ENCODE measurements at regions of chr12 and their contacts with region 1.

Region 1: GRCh38 chr12:52032804-52033502 is 18.3 kb upstream of the NR4A1 start:
- DNase-seq: peak; percentile 57 to 93 (median 78)
- ATAC-seq: peak; percentile 81 to 90 (median 89)
- H3K4me3 ChIP-seq: peak overlapping the region; percentile 25 to 52
- H3K4me3 Mint-ChIP-seq: peak overlapping the region; percentile 66 to 77 (median 68)
- H3K27ac ChIP-seq: peak overlapping the region; percentile 93
- H3K27ac Mint-ChIP-seq: peak overlapping the region; percentile 79 to 85
- H3K4me1 ChIP-seq: peaks cover 5 to 40% of the 10 kb centered on the region in 2 experiments
- H3K4me1 Mint-ChIP-seq: peaks cover 28 to 42% (median 32%) of the 10 kb centered on the region in 3 donors
- H3K27me3 ChIP-seq: peaks cover 0 to 7% of the 10 kb centered on the region in 2 experiments
- H3K27me3 Mint-ChIP-seq: no peaks in the 10 kb centered on the region

Region 2: DNA sequence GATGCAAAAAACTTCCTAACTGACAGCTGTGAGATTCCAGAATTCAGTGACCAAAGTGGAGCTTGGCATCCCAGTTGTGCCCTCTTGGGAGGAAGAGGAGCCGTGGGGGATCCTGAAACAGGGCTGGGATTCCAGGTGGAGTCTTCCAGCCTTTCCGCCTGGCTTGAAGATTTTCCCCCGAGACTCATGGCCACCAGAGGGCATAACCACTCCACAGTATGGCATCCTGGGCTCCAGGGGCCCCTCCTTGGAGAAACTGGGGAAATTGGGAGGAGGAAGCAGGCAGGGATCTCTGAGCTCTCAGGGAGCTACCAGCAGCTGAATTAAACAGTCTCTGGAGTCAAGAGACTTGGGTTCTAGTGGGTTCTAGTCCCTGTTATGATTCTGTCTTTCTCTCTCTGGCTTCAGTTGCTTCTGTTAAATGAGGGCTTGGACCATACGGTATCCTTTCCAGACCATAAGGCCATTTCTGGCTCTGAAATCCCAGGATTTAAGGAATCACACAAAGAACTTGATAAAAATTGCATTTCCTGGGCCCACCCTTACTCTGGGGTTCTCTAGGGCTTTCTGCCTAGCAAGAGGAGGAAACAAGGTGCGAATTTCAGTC is 28.8 kb before region 1 on chr12:
- CTCF ChIA-PET with region 1: interaction called in 1 of 2 experiments, 5 read pairs
- POLR2A ChIA-PET with region 1: interaction called, 3 to 16 read pairs
- DNase-seq: peak in 1 of 35 experiments; percentile 41
- ATAC-seq: no peak
- H3K4me3 ChIP-seq: no peak overlapping the region
- H3K4me3 Mint-ChIP-seq: no peak overlapping the region
- H3K27ac ChIP-seq: no peak overlapping the region
- H3K27ac Mint-ChIP-seq: peak overlapping the region; percentile 39 to 43
- H3K4me1 ChIP-seq: peaks cover 3 to 33% of the 10 kb centered on the region in 2 experiments
- H3K4me1 Mint-ChIP-seq: peaks cover 16 to 32% (median 24%) of the 10 kb centered on the region in 3 donors
- H3K27me3 ChIP-seq: peaks cover 0 to 28% of the 10 kb centered on the region in 2 experiments
- H3K27me3 Mint-ChIP-seq: no peaks in the 10 kb centered on the region

Region 3: GRCh38 chr12:52050761-52051541 is 18.0 kb after region 1 on chr12 and contains the start of gene NR4A1:
- CTCF ChIA-PET with region 1: interaction called, 3 to 23 read pairs
- POLR2A ChIA-PET with region 1: interaction called, 4 to 14 read pairs
- DNase-seq: peak; percentile 94 to 100 (median 99)
- ATAC-seq: peak; percentile 85 to 92 (median 90)
- H3K4me3 ChIP-seq: peak within 1 kb of the TSS; percentile 91
- H3K4me3 Mint-ChIP-seq: peak within 1 kb of the TSS; percentile 88 to 90 (median 89)
- H3K27ac ChIP-seq: peak within 1 kb of the TSS; percentile 99
- H3K27ac Mint-ChIP-seq: peak within 1 kb of the TSS; percentile 91 to 93
- H3K4me1 ChIP-seq: peaks cover 19 to 39% of the 10 kb centered on the region in 2 experiments
- H3K4me1 Mint-ChIP-seq: peaks cover 34 to 41% (median 38%) of the 10 kb centered on the region in 3 donors
- H3K27me3 ChIP-seq: peaks cover 0 to 18% of the 10 kb centered on the region in 2 experiments
- H3K27me3 Mint-ChIP-seq: peaks cover 0 to 4% of the 10 kb centered on the region in 2 donors
- total RNA-seq, gene NR4A1: 5.9 to 103 (median 7.3) TPM

Region 4: DNA sequence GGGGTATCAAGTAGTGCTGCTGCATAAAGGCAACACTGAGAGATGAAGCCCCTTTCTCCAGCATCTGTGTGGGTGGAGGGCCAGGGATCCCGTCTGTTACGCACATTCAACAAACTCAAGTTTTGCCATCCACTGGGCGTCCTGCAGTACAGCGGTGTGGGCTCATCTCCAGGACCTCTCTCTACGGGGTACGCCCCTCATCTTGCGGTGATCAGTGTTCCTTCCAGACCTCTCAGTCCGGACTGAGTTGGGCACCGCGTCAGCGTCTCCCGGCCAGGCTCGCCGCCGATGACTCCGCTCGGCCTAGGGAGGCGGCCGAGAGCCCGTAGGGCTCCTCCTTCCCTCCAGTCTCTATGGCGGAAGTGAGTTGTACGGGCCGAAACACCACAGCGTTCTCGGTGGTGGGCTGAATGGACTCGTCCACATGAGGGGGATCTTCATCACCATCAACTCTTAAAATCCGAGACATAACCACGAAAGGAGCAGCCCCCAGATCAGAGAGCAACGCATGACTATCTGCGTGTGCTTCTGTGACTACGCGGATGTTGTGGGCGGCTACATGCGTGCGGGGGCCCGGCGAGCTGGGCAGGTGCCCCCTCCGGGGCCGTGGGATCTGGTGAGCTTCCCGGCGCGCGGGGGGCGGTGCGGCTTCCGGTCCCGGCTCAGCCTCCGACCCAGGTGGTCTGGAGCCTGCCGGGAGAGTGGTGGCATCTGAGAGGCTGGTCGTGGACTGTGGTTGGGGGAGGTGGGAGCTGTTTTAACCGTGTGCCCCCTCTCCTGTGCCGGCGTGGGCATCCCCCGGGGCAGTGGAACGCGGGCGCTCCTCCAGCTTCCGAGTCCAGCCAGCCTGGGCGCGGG is 36.6 kb after region 1 on chr12 and contains the start of gene ATG101:
- CTCF ChIA-PET with region 1: interaction called, 6 to 37 read pairs
- POLR2A ChIA-PET with region 1: interaction called in 1 of 2 experiments, 3 read pairs
- DNase-seq: peak; percentile 76 to 93 (median 81)
- ATAC-seq: peak; percentile 92 to 97 (median 96)
- H3K4me3 ChIP-seq: peak within 1 kb of the TSS; percentile 93 to 99
- H3K4me3 Mint-ChIP-seq: peak within 1 kb of the TSS; percentile 91 to 98 (median 98)
- H3K27ac ChIP-seq: peak within 1 kb of the TSS; percentile 91
- H3K27ac Mint-ChIP-seq: peak within 1 kb of the TSS; percentile 98 to 99
- H3K4me1 ChIP-seq: peaks cover 20 to 38% of the 10 kb centered on the region in 2 experiments
- H3K4me1 Mint-ChIP-seq: peaks cover 42 to 47% (median 46%) of the 10 kb centered on the region in 3 donors
- H3K27me3 ChIP-seq: no peaks in the 10 kb centered on the region
- H3K27me3 Mint-ChIP-seq: peaks cover 0 to 7% of the 10 kb centered on the region in 2 donors
- total RNA-seq, gene ATG101: 24.8 to 30.3 (median 25.9) TPM